CD4-positive, alpha-beta memory T cell (primary cell): ENCODE measurements at regions of chr6 and their contacts with region 1.

Region 1: GRCh38 chr6:152982768-152983636 is at the start of gene FBXO5:
- DNase-seq: peak; percentile 96 to 98 (median 97)
- H3K4me3 ChIP-seq: peak within 1 kb of the TSS; percentile 64 to 82
- H3K4me3 Mint-ChIP-seq: peak within 1 kb of the TSS; percentile 96 to 99 (median 98)
- H3K27ac ChIP-seq: peak within 1 kb of the TSS; percentile 87
- H3K27ac Mint-ChIP-seq: peak within 1 kb of the TSS; percentile 97 to 99 (median 99)
- H3K4me1 ChIP-seq: peaks cover 43% of the 10 kb centered on the region
- H3K4me1 Mint-ChIP-seq: peaks cover 34 to 66% (median 45%) of the 10 kb centered on the region in 4 donors
- H3K27me3 ChIP-seq: no peaks in the 10 kb centered on the region
- H3K27me3 Mint-ChIP-seq: no peaks in the 10 kb centered on the region
- total RNA-seq, gene FBXO5: 9.9 to 10.4 TPM

Region 2: DNA sequence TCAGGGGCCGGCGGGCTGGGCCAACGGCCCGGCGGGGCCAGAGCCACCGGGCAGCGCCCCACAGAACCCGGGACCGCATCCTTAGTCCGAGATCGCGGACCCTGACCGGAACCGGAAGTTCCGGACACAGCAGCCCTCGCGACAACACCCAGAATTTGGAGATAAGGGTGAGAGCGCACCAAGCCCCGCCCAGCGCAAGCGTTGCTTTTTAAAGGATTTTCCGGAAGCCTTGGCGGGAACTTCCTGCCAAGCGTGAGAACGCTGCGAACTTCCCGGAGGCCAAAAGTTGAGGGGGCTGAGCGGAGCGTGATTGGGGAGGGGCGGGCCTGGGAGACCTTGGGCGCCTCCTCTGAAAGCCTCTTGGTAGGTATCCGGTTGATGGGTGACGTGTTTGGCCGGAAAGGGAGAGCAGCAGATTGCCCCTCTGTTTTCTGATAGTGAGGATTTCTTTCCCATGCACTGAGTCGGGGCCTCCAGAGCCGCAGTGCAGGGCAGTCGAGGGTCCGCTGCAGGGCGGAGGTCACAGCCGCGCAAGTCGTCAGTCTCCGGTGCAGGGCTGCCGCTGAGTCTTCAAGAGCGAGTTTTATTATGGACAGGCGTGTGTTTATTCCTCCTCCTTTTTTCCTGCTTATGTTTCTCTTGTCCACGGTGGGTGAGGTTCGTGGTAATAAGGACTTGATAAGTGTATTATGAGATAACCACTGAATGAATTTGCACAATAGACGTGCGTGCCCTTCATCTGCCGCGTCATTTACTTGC is 19.8 kb after region 1 on chr6 and contains the start of gene MTRF1L:
- CTCF ChIA-PET with region 1: interaction called, 8 read pairs
- POLR2A ChIA-PET with region 1: interaction called, 17 read pairs
- intact Hi-C with region 1: loop called (anchors 2 kb)
- DNase-seq: peak; percentile 73 to 89 (median 77)
- H3K4me3 ChIP-seq: peak within 1 kb of the TSS; percentile 89 to 92
- H3K4me3 Mint-ChIP-seq: peak within 1 kb of the TSS; percentile 94 to 98 (median 96)
- H3K27ac ChIP-seq: peak within 1 kb of the TSS; percentile 82
- H3K27ac Mint-ChIP-seq: peak within 1 kb of the TSS; percentile 82 to 97 (median 94)
- H3K4me1 ChIP-seq: peaks cover 43% of the 10 kb centered on the region
- H3K4me1 Mint-ChIP-seq: peaks cover 34 to 48% (median 41%) of the 10 kb centered on the region in 4 donors
- H3K27me3 ChIP-seq: no peaks in the 10 kb centered on the region
- H3K27me3 Mint-ChIP-seq: no peaks in the 10 kb centered on the region
- total RNA-seq, gene MTRF1L: 17.3 to 18.3 TPM

Region 3: DNA sequence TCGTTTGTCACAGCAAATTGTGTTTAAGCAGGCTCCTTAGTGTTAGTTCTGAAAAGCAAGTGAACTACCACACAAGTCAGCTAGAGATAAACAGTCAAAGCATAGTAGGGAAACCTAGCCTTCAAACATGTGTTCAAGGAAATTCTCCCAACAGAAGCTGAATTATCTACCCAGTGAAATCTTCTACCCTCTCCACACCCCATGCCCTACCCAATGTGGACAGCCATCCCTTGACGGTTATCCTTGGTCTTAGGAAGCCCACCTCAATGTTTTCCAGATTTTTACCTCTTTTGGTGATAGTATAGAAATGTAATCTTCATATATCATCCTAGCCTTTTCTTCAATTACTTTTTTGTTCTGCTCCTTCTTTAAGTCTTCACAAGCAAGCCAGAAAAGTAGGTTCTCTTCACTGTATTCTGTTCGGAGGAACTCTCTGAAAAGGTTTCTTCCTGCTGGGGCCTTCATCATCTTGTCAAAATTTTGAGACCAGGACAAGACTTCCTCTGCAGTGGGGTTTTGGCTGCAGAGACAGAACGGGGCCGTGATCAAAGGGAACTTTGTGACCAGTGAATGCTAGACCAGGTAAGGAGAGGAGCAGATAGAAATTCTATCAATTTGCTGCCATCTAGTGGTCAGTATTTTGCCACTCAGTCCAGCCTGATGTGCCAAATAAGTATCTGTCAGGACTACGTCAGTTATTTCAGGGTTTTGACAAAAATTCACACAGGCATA is 41.1 kb after region 1 on chr6:
- CTCF ChIA-PET with region 1: interaction called, 3 read pairs
- POLR2A ChIA-PET with region 1: no interaction called
- intact Hi-C with region 1: loop called (anchors 2 kb)
- DNase-seq: peak; percentile 40 to 61 (median 48)
- H3K4me3 ChIP-seq: no peak overlapping the region
- H3K4me3 Mint-ChIP-seq: no peak overlapping the region
- H3K27ac ChIP-seq: no peak overlapping the region
- H3K27ac Mint-ChIP-seq: no peak overlapping the region
- H3K4me1 ChIP-seq: no peaks in the 10 kb centered on the region
- H3K4me1 Mint-ChIP-seq: peaks cover 0 to 5% (median 1%) of the 10 kb centered on the region in 4 donors
- H3K27me3 ChIP-seq: no peaks in the 10 kb centered on the region
- H3K27me3 Mint-ChIP-seq: peaks cover 13 to 19% of the 10 kb centered on the region in 2 donors